ENCODE measurements at regions of chr6 and their contacts with region 1.

Region 1: DNA sequence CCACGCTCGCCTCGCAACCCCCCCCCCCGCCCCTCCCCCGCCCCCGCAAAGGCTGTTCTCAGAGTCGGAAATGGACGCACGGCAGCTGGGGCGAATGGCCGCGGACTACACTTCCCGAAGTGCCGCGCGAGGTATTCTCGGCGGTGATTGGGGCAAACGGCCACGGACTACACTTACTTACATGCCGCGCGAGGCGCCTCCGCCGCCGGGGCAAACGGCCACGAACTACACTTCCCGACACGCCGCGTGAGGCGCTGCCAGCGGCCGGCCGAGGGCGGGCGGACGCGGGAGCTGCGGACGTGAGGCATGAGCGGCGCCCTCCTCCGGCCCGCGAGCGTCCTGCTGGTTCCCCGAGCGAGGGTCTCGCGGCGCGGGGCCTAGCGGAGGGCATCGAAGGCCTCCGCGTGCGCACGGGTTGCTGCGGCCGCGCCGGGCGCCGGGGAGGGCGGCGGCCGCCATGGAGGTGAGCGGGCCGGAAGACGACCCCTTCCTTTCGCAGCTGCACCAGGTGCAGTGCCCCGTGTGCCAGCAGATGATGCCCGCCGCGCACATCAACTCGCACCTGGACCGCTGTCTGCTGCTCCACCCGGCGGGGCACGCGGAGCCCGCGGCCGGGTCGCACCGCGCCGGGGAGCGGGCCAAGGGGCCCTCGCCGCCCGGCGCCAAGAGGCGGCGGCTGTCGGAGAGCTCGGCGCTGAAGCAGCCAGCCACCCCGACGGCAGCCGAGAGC is at the start of gene WRNIP1:
- DNase-seq: peak; percentile 96
- ATAC-seq: peak; percentile 92
- H3K4me3 Mint-ChIP-seq: peak within 1 kb of the TSS; percentile 89
- H3K27ac Mint-ChIP-seq: peak within 1 kb of the TSS; percentile 95
- H3K4me1 Mint-ChIP-seq: peaks cover 38% of the 10 kb centered on the region
- H3K27me3 Mint-ChIP-seq: no peaks in the 10 kb centered on the region
- CTCF ChIP-seq: no peak
- total RNA-seq, gene WRNIP1: 33.8 to 36.3 TPM (median 36.2 TPM) in 3 replicates

Region 2: GRCh38 chr6:2351807-2352431 is 413.4 kb before region 1 on chr6:
- CTCF ChIA-PET with region 1: no interaction called
- POLR2A ChIA-PET with region 1: no interaction called
- DNase-seq: no peak
- ATAC-seq: no peak
- H3K4me3 Mint-ChIP-seq: no peak overlapping the region
- H3K27ac Mint-ChIP-seq: no peak overlapping the region; the same call in 1 of the 2 replicates
- H3K4me1 Mint-ChIP-seq: peaks cover 7% of the 10 kb centered on the region
- H3K27me3 Mint-ChIP-seq: no peaks in the 10 kb centered on the region
- CTCF ChIP-seq: no peak

Region 3: DNA sequence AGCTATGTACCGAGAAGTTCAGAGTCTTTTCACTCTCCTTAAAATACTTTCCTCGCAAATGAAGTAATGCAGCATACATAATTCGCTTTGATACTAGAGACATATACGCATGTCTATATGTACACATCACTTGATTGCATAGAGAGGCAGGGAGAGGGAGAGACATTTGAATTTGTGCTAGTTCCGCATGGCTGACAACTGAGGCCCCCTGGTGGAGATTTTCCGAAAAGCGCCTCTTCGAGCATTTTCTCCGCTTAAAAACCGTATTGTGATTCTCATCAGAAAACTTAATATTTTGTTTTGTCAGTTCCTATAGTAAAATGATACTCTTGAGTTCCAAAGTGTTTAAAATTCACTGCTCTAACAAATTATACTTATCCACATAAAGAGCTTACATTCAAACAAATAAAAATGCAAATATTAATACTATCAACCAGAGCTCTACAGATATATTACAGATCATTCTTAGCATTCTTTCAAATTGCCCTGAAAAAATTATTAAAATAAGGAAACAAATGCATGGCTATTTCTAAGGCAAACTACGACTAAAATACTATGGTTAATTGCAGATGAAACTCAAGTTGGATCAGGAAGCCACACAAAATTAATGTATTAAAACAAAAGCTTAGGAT is 15.2 kb before region 1 on chr6:
- CTCF ChIA-PET with region 1: interaction called, 15 read pairs
- POLR2A ChIA-PET with region 1: no interaction called
- DNase-seq: peak; percentile 62
- ATAC-seq: peak; percentile 32; the same call in 1 of the 2 replicates
- H3K4me3 Mint-ChIP-seq: no peak overlapping the region
- H3K27ac Mint-ChIP-seq: no peak overlapping the region
- H3K4me1 Mint-ChIP-seq: peaks cover 8% of the 10 kb centered on the region
- H3K27me3 Mint-ChIP-seq: no peaks in the 10 kb centered on the region
- CTCF ChIP-seq: peak; percentile 83

Region 4: GRCh38 chr6:2783188-2783963 is 18.0 kb after region 1 on chr6:
- CTCF ChIA-PET with region 1: interaction called, 11 read pairs
- POLR2A ChIA-PET with region 1: no interaction called
- DNase-seq: peak; percentile 43
- ATAC-seq: peak; percentile 96
- H3K4me3 Mint-ChIP-seq: no peak overlapping the region
- H3K27ac Mint-ChIP-seq: no peak overlapping the region
- H3K4me1 Mint-ChIP-seq: peaks cover 5% of the 10 kb centered on the region
- H3K27me3 Mint-ChIP-seq: no peaks in the 10 kb centered on the region
- CTCF ChIP-seq: no peak

Measured in WTC11 (cell line).